ENCODE measurements at regions of chr3 and their contacts with region 1.

Region 1: GRCh38 chr3:33980252-33980651 is 181.8 kb downstream of the PDCD6IP start:
- DNase-seq: peak; percentile 89 to 94
- ATAC-seq: peak; percentile 99 to 100
- H3K4me3 ChIP-seq: no peak overlapping the region
- H3K27ac ChIP-seq: peak overlapping the region; percentile 48 to 59; a peak in 5 of 6 replicates
- H3K4me1 ChIP-seq: peaks cover 13% of the 10 kb centered on the region
- CTCF ChIP-seq: peak; percentile 93
- EP300 ChIP-seq: peak in 1 of 2 experiments; percentile 27; a peak in 1 of 5 replicates
- POLR2A ChIP-seq: no peak
- RAD21 ChIP-seq: peak; percentile 98

Region 2: GRCh38 chr3:33883538-33883950 is 96.7 kb before region 1 on chr3:
- CTCF ChIA-PET with region 1: interaction called, 13 read pairs
- POLR2A ChIA-PET with region 1: no interaction called
- DNase-seq: peak; percentile 21 to 33
- ATAC-seq: peak in 1 of 2 experiments; percentile 44; a peak in 2 of 6 replicates
- H3K4me3 ChIP-seq: peak overlapping the region; percentile 14; the same call in 2 of the 3 replicates
- H3K27ac ChIP-seq: peak overlapping the region; percentile 2 to 52; a peak in 2 of 6 replicates
- H3K4me1 ChIP-seq: peaks cover 6% of the 10 kb centered on the region; the same call in 1 of the 3 replicates
- CTCF ChIP-seq: peak; percentile 94
- EP300 ChIP-seq: no peak
- POLR2A ChIP-seq: no peak
- RAD21 ChIP-seq: peak; percentile 85 to 95

Region 3: DNA sequence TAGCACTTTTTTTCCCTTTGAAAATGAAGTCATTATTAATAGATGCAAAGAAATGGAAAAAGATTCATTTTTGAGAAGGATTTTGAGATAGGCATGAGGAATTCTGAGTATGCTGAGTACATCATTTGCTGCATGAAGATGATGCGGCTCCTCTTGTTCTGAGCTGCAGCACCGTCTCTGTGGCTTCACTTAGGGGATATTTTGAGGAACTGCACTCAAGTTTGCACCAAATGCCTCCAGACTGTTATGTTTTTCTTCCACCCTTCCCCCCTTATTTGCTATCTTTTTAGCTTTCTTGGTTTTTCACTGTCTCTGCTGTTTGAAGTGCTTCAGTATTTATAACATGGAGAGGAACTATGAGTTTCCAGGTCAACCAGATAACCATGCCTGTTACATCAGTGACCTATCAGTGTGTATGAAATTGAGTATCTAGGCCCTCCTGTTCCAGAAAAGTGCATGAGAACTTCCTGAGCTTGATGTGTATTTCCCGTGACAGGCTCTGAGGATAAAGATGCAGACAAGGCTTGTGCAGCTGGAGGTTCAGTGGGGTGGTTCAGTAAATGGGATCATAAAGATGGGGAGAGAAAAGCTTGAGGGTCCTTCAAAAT is 53.1 kb before region 1 on chr3:
- CTCF ChIA-PET with region 1: no interaction called
- POLR2A ChIA-PET with region 1: no interaction called
- DNase-seq: no peak
- ATAC-seq: no peak
- H3K4me3 ChIP-seq: no peak overlapping the region
- H3K27ac ChIP-seq: no peak overlapping the region
- H3K4me1 ChIP-seq: no peaks in the 10 kb centered on the region
- CTCF ChIP-seq: no peak
- EP300 ChIP-seq: no peak
- POLR2A ChIP-seq: no peak
- RAD21 ChIP-seq: no peak

Region 4: DNA sequence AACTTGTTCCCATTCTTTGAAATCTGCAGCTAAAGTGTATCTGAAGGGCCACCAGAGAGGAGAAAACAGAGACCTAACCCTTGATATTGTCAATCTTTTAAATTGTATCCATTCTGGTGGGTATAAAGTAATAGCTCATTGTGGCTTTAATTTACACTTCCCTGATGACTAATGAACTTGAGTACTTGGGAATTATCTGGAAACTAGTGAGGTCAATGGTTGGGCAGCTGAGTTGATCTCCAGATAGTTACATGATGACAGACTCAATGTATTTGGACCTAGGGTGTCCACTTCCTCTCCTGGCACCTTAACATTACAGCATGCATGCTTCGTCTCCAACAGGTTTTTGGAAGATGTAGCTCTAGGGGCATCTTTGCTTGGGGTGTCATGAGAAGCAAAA is 13.4 kb after region 1 on chr3:
- CTCF ChIA-PET with region 1: interaction called, 11 read pairs
- POLR2A ChIA-PET with region 1: no interaction called
- DNase-seq: no peak
- ATAC-seq: no peak
- H3K4me3 ChIP-seq: no peak overlapping the region
- H3K27ac ChIP-seq: no peak overlapping the region
- H3K4me1 ChIP-seq: no peaks in the 10 kb centered on the region
- CTCF ChIP-seq: no peak
- EP300 ChIP-seq: no peak
- POLR2A ChIP-seq: no peak
- RAD21 ChIP-seq: no peak

Region 5: DNA sequence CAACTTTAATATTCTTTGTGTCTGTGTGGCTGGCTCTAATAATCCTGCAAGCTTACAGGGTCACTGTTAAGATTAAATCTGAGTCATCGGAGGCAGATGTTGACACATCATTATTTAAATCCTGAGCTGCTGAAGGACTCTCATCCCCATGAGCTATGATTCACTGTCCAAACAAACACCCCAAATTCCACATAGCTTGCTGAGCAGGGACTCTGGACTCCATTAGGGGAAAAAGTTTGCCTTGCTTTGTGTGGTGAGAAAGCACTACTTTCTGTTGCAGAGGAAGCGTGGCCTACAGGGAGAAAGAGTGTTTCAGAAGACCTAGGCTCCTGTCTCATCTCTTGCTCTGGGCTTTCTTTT is 31.8 kb after region 1 on chr3:
- CTCF ChIA-PET with region 1: interaction called, 12 read pairs
- POLR2A ChIA-PET with region 1: interaction called, 3 read pairs
- DNase-seq: peak; percentile 97 to 98
- ATAC-seq: peak; percentile 94
- H3K4me3 ChIP-seq: no peak overlapping the region
- H3K27ac ChIP-seq: peak overlapping the region; percentile 81 to 91
- H3K4me1 ChIP-seq: peaks cover 58% of the 10 kb centered on the region
- CTCF ChIP-seq: no peak
- EP300 ChIP-seq: peak; percentile 86 to 88; a peak in 3 of 5 replicates
- POLR2A ChIP-seq: no peak
- RAD21 ChIP-seq: peak; percentile 47 to 66

Region 6: DNA sequence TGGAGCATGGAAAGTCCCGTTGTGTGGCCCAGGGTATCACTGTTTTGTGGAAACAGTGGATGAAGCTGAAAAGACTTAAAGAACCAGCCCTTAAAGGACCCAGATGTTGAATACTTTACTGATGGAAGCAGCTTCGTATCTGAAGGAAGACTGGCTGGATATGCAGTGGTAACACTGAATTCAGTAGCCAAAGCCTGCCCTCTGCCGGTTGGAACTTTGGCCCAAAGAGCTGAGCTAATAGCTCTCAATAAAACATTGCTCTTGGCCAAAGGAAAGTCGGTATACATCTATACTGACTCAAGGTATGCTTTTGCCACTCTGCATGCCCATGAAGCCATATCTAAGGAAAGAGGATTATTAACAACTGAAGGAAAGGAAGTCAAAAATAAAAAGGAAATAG is 703.6 kb after region 1 on chr3:
- CTCF ChIA-PET with region 1: interaction called, 38 read pairs
- POLR2A ChIA-PET with region 1: no interaction called
- DNase-seq: peak; percentile 2 to 64
- ATAC-seq: peak; percentile 88 to 94
- H3K4me3 ChIP-seq: no peak overlapping the region
- H3K27ac ChIP-seq: no peak overlapping the region
- H3K4me1 ChIP-seq: no peaks in the 10 kb centered on the region
- CTCF ChIP-seq: peak; percentile 69
- EP300 ChIP-seq: no peak
- POLR2A ChIP-seq: no peak
- RAD21 ChIP-seq: peak; percentile 82 to 87